ENCODE measurements at regions of chr3 and their contacts with region 1.

Region 1: DNA sequence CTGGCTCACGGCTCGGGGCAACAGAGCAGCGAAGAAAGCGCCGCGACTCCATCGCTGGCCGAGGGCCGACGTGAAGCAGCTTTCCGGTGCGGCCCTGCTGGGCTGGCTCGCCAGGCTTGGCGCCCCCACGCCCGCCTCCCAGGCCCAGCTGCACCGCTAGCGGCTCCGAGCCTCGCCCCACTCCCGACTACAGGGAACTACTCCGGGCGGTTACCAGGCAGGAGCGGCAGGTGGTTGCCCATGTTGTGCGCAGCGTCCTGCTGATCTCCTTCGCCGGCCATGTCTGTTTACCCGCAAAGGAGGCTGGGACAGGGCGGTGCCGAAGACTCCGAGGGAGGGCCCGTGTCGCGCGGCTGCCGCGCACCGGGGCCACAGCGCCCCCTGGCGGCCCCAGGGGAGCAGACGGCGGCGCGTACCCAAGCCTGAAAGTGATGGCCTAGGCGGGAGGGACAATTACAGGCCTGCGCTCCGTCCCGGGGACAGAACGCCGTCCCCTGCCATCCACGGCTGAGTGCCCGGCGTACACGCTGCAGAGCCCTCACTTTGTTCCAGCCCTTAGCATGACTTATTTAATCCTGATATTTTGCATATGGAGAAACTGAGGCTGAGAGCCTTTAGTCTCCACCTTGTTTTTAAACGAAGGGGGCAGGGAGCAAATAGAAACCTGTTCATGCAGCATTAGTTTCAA is at the start of gene CRBN:
- DNase-seq: peak; percentile 91
- ATAC-seq: peak; percentile 99
- H3K4me3 ChIP-seq: peak within 1 kb of the TSS; percentile 99
- H3K27ac ChIP-seq: no peak within 1 kb of the TSS
- H3K4me1 ChIP-seq: peaks cover 19% of the 10 kb centered on the region
- H3K27me3 ChIP-seq: no peaks in the 10 kb centered on the region
- CTCF ChIP-seq: peak; percentile 96
- total RNA-seq, gene CRBN: 29.3 and 31.2 TPM in 2 replicates

Region 2: DNA sequence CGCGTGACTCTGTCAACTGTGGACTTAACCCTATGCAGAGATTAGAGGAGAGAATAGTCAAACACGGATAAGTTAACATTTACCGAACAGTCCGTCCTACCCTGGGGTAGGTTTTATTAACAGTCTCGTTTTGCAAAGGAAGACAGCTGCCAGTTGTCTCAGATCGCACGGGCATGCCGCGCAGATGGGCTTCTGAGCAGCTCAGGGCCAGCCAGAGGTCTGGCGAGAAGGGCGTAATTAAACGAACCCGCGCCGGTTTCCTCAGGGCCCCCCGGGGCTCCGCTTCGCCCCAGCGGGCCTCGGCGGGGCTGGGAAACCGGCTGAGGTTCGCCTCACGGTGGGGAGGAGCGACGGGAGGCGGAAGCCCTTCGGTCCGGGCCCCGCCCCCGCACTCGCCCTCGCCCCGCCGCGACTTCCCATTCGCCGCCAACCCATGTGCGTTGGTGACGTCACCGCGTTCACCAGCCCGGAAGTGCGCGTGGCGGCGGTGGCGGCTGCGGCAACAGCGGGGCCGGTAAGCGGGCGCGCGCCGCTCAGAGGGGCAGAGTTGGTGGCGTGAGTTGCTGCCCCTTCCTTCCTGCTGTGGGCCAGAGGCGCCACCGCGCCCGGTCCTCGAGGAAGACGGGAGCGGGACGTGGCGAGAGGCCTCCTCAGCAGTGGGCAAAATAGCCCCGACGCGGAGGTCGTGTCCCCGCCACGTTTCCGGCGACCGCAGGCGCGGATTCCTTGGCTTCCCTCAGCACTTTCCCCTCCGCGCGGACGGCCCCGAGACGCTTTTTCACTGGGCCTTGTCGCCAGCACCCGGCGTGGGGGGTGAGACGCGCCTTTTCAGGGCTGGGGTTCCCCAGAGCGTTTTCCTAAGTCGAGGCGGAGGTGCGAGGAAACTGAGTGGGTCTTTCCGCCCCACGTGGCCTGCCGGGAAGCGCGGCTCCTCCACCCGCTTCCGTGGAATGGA is 52.8 kb before region 1 on chr3 and contains the start of gene TRNT1:
- CTCF ChIA-PET with region 1: no interaction called
- POLR2A ChIA-PET with region 1: no interaction called
- intact Hi-C with region 1: loop called (anchors 2 kb)
- DNase-seq: peak; percentile 92
- ATAC-seq: peak; percentile 95
- H3K4me3 ChIP-seq: peak within 1 kb of the TSS; percentile 86
- H3K27ac ChIP-seq: peak within 1 kb of the TSS; percentile 66
- H3K4me1 ChIP-seq: peaks cover 19% of the 10 kb centered on the region
- H3K27me3 ChIP-seq: no peaks in the 10 kb centered on the region
- CTCF ChIP-seq: no peak
- total RNA-seq, gene TRNT1: 26.2 and 33.2 TPM in 2 replicates

Region 3: DNA sequence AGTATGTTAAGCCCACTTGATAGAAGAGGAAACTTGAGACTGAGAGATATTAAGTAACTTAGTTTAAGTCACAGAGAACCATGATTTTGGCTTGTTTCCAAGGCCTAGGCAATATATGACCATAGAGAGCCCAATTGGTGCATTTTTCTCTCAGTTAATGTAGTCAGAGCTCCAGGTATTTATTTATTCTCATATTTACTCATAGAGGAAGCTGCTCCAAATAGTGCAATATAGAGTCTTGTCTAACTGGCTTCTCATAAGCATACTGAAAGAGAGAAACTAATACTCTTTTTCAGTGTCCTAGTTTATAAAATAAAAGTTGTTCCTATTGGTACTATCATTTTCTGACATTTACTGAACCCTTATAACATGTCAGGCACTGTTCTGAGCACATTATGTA is 37.6 kb before region 1 on chr3:
- CTCF ChIA-PET with region 1: no interaction called
- POLR2A ChIA-PET with region 1: no interaction called
- intact Hi-C with region 1: loop called (anchors 5 kb)
- DNase-seq: no peak
- ATAC-seq: no peak
- H3K4me3 ChIP-seq: no peak overlapping the region
- H3K27ac ChIP-seq: no peak overlapping the region
- H3K4me1 ChIP-seq: no peaks in the 10 kb centered on the region; the same call in 1 of the 2 replicates
- H3K27me3 ChIP-seq: no peaks in the 10 kb centered on the region
- CTCF ChIP-seq: no peak